ENCODE measurements at regions of chr19 and their contacts with region 1.

Region 1: GRCh38 chr19:52692379-52693008 is 42.4 kb downstream of the ZNF611 start:
- DNase-seq: no peak
- H3K4me3 ChIP-seq: no peak overlapping the region
- H3K27ac ChIP-seq: no peak overlapping the region
- H3K4me1 ChIP-seq: peaks cover 18% of the 10 kb centered on the region
- H3K27me3 ChIP-seq: no peaks in the 10 kb centered on the region
- CTCF ChIP-seq: no peak

Region 2: DNA sequence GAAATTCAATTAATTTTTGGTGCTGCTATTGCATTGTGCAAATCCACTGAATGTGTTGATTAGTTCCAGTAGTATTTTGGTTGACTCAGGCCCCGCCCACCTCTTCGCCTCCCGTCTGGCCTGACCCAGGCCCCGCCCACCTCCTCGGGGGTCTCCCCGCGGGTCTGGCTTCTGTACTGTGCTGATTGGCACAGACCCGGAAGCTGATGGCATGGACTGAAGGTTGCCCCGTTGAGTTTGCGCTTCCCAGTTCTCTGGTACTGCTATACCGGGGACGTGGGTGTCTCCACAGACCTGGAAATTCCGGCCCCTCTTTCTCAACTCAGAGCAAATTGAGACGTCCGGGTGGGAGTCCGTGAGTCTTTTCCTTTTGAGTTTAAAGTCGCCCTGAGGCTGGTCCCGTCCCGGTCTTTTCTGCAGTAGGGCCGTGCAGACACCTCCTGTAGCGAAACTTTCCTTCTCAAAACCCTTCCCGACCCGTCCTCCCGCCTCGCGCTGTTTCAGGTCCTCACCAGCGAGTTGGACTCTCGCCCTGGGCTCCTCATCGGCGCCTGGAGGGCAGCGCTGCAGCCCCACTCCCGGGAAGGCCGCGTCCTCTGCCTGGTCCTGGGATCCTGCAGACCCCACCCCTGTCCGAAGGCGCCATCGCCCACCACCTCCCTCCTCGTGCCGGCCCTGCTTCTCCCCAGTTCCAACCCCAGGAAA is 107.6 kb before region 1 on chr19:
- CTCF ChIA-PET with region 1: no interaction called
- POLR2A ChIA-PET with region 1: no interaction called
- intact Hi-C with region 1: no loop called
- DNase-seq: no peak
- H3K4me3 ChIP-seq: no peak overlapping the region
- H3K27ac ChIP-seq: no peak overlapping the region
- H3K4me1 ChIP-seq: no peaks in the 10 kb centered on the region
- H3K27me3 ChIP-seq: no peaks in the 10 kb centered on the region
- CTCF ChIP-seq: no peak

Region 3: GRCh38 chr19:52761696-52762095 is 69.2 kb after region 1 on chr19:
- CTCF ChIA-PET with region 1: no interaction called
- POLR2A ChIA-PET with region 1: no interaction called
- intact Hi-C with region 1: no loop called
- DNase-seq: no peak
- H3K4me3 ChIP-seq: no peak overlapping the region
- H3K27ac ChIP-seq: no peak overlapping the region
- H3K4me1 ChIP-seq: no peaks in the 10 kb centered on the region
- H3K27me3 ChIP-seq: no peaks in the 10 kb centered on the region
- CTCF ChIP-seq: no peak

Region 4: GRCh38 chr19:52823676-52824075 is 131.2 kb after region 1 on chr19:
- CTCF ChIA-PET with region 1: no interaction called
- POLR2A ChIA-PET with region 1: no interaction called
- intact Hi-C with region 1: no loop called
- DNase-seq: no peak
- H3K4me3 ChIP-seq: no peak overlapping the region
- H3K27ac ChIP-seq: no peak overlapping the region
- H3K4me1 ChIP-seq: no peaks in the 10 kb centered on the region
- H3K27me3 ChIP-seq: no peaks in the 10 kb centered on the region
- CTCF ChIP-seq: no peak

Region 5: DNA sequence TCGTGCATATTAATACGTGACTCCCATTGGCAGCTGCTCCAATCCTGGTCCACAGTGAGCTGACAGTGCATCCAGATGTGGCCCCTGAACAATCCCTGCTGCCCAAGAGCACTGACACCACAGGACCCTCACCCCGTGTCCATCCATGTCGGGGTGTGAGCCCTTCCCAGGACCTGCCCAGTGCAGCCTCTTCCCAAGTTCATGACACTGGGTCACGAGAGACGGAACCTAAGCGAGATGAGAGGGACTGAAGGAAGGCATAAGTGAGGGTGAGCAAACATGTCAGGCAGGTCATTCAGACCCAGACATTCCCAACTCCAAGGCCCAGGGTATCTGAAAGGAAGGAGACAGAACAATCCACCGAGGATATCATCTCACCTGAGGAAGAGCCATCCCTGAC is 161.4 kb after region 1 on chr19:
- CTCF ChIA-PET with region 1: no interaction called
- POLR2A ChIA-PET with region 1: no interaction called
- intact Hi-C with region 1: no loop called
- DNase-seq: no peak
- H3K4me3 ChIP-seq: no peak overlapping the region
- H3K27ac ChIP-seq: no peak overlapping the region
- H3K4me1 ChIP-seq: no peaks in the 10 kb centered on the region; the same call in 1 of the 2 replicates
- H3K27me3 ChIP-seq: no peaks in the 10 kb centered on the region
- CTCF ChIP-seq: no peak

Region 6: DNA sequence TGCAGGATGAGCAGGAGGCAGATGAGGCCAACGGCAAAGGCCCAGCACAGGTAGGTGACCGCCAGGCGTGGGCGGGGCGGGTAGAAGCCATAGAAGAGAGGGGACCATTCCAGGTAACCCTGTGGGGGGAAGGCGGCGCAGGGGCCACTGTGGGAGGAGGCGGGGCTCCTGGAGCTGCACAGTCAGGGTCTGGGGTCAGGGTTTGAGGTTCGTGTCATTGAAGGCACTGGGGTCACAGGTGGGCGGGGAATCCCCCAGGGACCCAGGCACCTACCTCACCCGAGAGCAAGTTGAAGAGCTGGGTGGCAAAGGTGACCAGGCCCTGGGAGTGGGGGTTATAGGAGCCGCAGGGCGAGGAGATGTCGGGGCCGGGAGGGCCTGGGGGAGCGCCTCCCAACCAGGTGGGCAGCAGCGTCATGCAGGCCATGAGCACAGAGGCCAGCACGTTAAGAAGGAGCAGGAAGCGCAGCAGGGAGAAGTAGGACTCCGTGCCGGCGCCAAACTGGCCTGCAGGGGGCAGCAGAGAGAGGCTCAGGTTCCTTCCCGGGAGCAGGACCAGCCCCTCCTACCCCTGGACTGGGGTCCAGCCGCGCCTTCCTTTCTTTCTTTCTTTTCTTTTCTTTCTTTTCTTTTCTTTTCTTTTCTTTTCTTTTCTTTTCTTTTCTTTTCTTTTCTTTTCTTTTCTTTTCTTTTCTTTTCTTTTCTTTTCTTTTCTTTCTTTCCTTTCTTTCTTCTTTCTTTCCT is 1475.9 kb after region 1 on chr19:
- CTCF ChIA-PET with region 1: no interaction called
- POLR2A ChIA-PET with region 1: interaction called, 12 read pairs
- intact Hi-C with region 1: no loop called
- DNase-seq: peak; percentile 69 to 91
- H3K4me3 ChIP-seq: no peak overlapping the region
- H3K27ac ChIP-seq: no peak overlapping the region
- H3K4me1 ChIP-seq: peaks cover 9% of the 10 kb centered on the region; the same call in 1 of the 2 replicates
- H3K27me3 ChIP-seq: no peaks in the 10 kb centered on the region
- CTCF ChIP-seq: peak; percentile 83